AG04449 (cell line): ENCODE measurements at regions of chr3 and their contacts with region 1.

Region 1: GRCh38 chr3:33113772-33114621 is at the start of gene CRTAP:
- DNase-seq: peak; percentile 69
- H3K4me3 ChIP-seq: peak within 1 kb of the TSS; percentile 84
- CTCF ChIP-seq: no peak

Region 2: DNA sequence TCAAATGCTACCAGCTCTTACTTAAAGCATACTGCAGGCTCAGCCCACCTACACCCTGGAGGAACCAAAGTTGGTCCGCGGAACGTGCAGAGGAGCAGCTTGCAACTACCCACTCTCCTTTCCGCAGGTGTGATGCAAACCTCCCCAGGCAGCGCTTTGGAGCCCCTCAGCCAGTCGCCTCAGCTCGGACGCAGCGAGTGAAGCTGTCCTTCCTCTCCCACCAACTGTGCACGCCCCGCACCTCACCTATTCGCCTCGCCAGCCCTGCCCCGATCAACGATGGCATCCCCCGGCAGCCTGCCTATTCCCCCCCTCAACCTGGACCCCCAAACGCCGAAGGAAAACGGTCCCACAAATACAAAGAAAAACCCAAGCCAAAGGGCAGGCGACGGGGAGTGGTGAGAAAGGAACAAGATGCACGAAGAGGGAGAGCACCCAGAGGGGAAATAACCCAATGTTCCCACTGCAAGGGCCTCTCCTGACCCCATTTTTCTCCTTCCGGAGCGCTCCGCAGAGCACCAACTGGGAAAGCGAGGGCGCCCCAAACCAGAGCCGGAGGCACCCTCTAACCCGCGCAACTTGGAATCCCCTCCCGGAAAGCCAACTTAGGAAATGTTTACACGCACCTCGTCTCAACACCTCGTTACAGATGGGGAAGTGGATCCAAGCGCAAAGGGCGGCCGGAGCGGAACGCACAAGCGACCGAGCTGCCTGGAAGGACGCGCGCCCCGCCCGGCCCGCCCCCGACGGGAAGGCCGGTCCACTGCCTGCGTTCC is 17.7 kb before region 1 on chr3:
- CTCF ChIA-PET with region 1: no interaction called
- POLR2A ChIA-PET with region 1: interaction called, 13 read pairs
- DNase-seq: no peak
- H3K4me3 ChIP-seq: peak overlapping the region; percentile 97
- CTCF ChIP-seq: no peak

Region 3: DNA sequence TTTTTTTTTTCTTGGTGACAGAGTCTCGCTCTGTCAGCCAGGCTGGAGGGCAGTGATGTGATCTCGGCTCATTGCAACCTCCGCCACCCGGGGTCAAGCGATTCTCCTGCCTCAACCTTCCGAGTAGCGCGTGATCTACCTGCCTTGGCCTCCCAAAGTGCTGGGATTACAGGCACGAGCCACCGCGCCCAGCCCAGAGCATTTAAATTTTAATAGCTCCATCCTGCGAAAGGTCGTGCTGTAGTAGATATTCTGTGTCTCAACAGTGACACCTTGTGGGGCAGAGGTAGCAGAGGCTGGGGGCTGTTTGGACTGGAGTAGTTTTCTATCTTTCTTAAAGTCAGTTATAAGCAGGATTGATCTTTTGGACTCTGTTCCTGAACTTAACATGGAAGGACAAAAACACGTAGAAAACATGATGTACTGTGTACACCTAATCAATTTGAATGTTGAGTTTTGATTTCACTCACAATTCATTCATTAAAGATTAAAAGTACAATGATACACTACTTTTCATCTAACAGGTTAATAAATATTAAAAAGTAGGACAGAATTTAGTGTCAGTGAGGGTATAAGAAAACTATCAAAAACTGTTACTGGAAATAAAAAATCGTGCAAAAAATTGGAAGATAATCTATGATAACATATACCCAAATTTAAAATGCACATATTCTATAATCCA is 673.5 kb after region 1 on chr3:
- CTCF ChIA-PET with region 1: no interaction called
- POLR2A ChIA-PET with region 1: no interaction called
- DNase-seq: peak; percentile 9
- H3K4me3 ChIP-seq: peak overlapping the region; percentile 51
- CTCF ChIP-seq: peak; percentile 79